ENCODE measurements at regions of chr13 and their contacts with region 1.

Region 1: DNA sequence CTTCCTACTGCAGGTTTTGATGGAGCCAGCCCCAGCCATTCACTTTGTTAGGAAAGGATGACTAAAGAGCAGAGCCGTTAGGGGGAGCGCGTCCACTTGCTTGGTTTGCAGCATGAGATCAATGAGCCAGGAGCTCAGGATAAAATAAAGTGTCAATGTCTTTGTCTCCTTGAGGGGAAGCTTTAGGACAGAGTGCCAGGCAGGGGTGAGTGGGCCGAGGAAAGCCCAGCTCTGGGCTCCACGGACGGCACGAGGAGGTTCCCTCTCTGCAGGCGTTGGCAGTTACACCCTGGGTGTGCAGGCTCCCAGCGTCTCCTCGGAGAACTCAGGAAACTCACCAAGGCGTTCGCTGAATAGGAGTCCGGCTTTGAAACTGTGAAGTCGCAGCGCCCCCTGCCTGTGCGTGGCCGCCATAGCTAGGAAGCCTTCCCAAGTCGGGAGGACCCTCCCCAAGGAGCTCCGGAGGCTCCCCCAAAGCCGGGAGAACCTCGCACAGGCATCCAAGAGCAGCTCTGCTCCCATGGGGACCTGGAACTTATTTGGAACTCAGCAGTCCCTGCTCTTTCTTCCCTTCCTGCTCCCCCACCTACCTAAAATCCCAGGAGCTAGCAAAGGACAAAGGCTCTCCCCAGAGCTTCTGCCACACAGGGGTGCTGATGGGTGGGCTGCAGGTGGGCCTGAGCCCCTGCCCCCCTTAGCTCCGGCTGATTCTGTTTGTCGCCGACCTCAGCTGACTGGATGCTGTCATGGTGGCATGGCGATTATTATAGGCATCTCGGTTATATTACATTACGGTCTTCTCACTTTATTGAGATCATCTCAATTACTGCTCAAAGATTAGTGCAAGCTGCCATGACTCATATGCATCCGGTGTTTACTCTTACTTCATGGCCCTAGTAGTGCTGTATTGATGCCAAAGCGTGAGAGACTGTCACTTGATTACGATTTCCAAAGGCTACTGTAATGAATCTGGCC is 34.4 kb downstream of the GSX1 start:
- DNase-seq: peak; percentile 73 to 84
- ATAC-seq: peak; percentile 85

Region 2: GRCh38 chr13:27194895-27195764 is 631.5 kb before region 1 on chr13:
- intact Hi-C with region 1: no loop called
- DNase-seq: no peak
- ATAC-seq: peak; percentile 70

Region 3: GRCh38 chr13:27362064-27362883 is 464.4 kb before region 1 on chr13:
- intact Hi-C with region 1: loop called in 1 of 2 experiments (anchors 10 kb)
- DNase-seq: peak; percentile 82 to 93
- ATAC-seq: peak; percentile 95

Region 4: GRCh38 chr13:27374650-27375049 is 452.0 kb before region 1 on chr13:
- intact Hi-C with region 1: loop called (anchors 2 to 10 kb)
- DNase-seq: peak; percentile 75 to 79
- ATAC-seq: peak; percentile 81

Region 5: DNA sequence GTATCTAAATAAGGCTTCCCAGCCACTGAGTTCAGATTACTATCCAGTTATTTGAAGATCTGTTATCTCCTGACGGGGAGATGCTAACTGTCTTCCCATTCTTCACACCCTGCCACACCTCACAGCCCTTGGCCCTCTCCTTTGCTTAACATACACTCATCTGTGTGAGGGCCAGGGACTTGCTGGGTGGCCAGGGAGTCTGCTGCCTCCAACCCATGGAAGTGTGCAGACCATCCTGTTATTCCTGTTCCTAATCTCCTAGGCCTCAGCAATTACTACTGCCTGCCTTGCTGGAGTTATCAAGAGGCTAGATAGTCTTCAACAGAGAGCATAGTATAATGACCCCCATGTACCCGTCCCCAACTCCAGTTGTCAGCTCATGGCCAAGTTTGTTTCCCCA is 438.4 kb before region 1 on chr13:
- intact Hi-C with region 1: loop called in 1 of 2 experiments (anchors 5 kb)
- DNase-seq: no peak
- ATAC-seq: no peak

Region 6: DNA sequence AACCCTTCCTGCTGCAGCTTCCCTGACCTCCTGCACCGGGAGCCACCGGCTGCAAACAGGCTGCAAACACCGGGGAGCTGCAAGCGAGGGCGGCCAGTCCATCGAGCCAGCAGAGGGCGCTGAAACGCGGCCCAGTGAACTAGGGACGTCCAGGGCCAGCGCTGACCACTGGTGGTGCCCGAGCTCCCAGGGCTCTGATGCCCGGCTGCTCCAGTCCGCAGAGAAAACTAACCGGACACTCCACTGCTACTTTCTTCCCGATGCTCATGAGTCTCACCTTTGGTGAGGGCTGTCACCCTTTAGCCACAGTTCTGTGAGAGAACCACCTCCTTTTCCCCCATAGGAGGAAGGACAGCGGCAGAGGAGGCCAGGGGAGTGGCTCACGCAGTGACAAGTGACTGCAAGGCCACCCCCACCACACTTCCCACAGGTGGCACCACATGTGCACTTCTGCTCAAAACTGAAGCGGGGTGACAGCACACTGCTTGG is 293.5 kb before region 1 on chr13:
- intact Hi-C with region 1: loop called in 1 of 2 experiments (anchors 5 kb)
- DNase-seq: peak; percentile 74 to 91
- ATAC-seq: peak; percentile 92

Region 7: DNA sequence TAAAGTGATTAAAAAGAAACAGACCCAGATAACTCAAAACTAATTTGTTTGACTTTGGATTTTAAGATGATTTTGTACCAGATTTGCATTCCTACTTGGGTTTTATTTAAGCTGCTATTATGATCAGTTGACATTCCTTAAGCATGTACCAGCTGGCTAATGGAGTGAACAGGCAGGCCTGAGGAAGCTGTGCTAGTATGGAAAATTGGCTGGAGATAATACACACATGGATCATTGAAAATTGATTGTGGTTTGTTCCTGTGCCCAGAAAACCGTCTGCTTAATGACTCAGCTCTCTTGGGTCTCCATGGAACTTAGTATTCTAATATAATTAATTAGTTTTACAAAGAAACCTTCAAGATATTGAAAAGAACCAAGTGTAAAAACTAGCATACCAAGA is 182.4 kb before region 1 on chr13:
- intact Hi-C with region 1: no loop called
- DNase-seq: no peak
- ATAC-seq: no peak

Region 8: DNA sequence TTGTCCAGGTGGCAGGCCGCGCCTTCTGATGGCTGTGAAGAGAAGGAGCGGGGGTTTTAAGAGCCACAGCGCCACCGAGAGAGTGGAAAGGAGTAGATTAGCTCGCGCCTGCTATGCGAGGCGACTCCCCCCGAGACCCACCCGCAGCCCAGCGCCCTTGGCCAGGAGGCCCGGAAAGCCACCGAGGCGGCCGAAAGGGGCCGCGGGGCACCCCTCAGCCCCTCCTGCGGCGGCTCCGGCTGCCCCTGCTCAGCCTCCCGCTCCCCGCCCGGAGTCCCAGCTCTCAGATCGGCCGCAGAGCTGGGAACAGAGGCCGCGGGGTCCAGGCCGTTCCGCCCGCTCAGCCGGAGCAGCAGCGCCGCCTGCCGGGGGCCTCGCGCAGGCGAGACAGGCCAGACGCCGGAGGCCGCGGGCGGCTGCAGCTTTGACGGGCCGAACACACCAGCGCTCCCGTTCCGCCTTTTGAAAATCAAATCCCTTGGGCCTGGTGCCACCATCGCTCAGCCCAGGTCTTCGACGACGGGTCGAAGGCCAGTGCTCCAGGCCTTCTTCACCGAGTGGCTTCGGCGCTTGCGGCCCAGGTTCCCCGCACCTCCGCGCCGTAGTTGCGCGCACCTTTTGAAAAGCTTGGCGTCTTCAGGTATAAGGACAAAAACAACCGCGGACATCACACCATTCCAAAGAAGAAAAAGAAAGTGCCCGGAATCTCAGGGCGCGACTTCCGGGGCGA is 127.2 kb after region 1 on chr13:
- intact Hi-C with region 1: loop called in 1 of 2 experiments (anchors 10 kb)
- DNase-seq: peak; percentile 81 to 87
- ATAC-seq: peak; percentile 72

Region 9: DNA sequence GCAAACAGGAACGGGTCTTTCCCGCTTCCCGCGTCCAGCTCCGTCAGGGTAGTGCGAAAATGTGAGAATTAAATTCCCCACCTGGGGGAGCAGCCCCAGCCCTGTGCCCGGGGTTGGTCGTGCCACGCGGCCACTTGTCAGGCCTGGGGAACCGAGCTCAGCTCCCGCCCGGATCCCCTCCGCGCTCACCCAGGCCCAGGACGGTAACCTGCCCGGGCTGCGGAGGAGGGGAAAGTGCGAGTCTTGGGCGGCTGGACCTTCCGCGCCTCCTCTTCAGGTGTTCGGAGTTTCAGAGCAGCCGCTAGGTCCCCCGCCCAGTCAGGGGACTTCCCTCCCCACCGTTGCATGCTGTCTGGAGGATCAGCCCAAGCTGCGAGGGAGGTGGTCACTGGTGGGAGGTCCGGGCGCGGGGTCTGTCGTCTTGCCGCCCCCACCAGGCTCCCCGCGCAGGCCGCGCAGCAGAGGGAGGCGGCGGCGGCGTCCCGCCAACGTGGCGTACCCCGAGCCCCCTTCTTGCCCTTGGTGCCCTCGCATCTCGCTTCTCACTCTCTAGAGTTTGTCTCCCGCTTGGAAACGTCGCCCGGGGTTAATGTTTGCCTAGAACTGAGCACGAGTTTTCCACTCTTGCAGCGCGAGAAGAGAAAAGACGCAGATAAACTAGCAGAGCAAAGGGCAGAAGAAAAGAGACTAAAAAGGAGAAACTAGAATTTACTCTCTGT is 153.8 kb after region 1 on chr13:
- intact Hi-C with region 1: loop called in 1 of 2 experiments (anchors 5 kb)
- DNase-seq: peak in 1 of 2 donors; percentile 68
- ATAC-seq: peak; percentile 28